Left cardiac atrium (tissue), 4 donors: ENCODE measurements at regions of chr17 and their contacts with region 1.

Region 1: GRCh38 chr17:28124962-28125361 is 82.5 kb downstream of the NLK start:
- DNase-seq: no peak
- ATAC-seq: no peak

Region 2: GRCh38 chr17:28136923-28137322 is 12.0 kb after region 1 on chr17:
- intact Hi-C with region 1: no loop called
- DNase-seq: no peak
- ATAC-seq: no peak

Region 3: GRCh38 chr17:28159924-28160323 is 35.0 kb after region 1 on chr17:
- intact Hi-C with region 1: loop called in 1 of 2 experiments (anchors 5 kb)
- DNase-seq: no peak
- ATAC-seq: no peak